Dorsolateral prefrontal cortex (tissue), 120 donors: ENCODE measurements at regions of chr11 and their contacts with region 1.

Region 1: GRCh38 chr11:68903288-68904247 is at the starts of genes IGHMBP2 and MRPL21:
- DNase-seq: peak; percentile 82 to 96 (median 88)
- H3K4me3 ChIP-seq: peak within 1 kb of the TSS; percentile 62 to 100 (median 94)
- H3K27ac ChIP-seq: peak within 1 kb of the TSS in 55 of 59 donors; percentile 23 to 92 (median 77)
- H3K27me3 ChIP-seq: no peaks in the 10 kb centered on the region
- CTCF ChIP-seq: peak in 25 of 56 donors; percentile 9 to 50 (median 30)
- total RNA-seq, gene IGHMBP2: 19.0 to 47.9 (median 30.3) TPM
- total RNA-seq, gene MRPL21: 23.7 to 72.9 (median 50.7) TPM

Region 2: GRCh38 chr11:68459886-68460740 is 443.5 kb before region 1 on chr11:
- intact Hi-C with region 1: loop called in 1 of 2 experiments (anchors 10 kb)
- DNase-seq: peak; percentile 91 to 99 (median 98)
- H3K4me3 ChIP-seq: peak overlapping the region; percentile 55 to 96 (median 86)
- H3K27ac ChIP-seq: peak overlapping the region; percentile 80 to 99 (median 95)
- H3K27me3 ChIP-seq: no peaks in the 10 kb centered on the region
- CTCF ChIP-seq: peak in 7 of 56 donors; percentile 1 to 43 (median 15)

Region 3: DNA sequence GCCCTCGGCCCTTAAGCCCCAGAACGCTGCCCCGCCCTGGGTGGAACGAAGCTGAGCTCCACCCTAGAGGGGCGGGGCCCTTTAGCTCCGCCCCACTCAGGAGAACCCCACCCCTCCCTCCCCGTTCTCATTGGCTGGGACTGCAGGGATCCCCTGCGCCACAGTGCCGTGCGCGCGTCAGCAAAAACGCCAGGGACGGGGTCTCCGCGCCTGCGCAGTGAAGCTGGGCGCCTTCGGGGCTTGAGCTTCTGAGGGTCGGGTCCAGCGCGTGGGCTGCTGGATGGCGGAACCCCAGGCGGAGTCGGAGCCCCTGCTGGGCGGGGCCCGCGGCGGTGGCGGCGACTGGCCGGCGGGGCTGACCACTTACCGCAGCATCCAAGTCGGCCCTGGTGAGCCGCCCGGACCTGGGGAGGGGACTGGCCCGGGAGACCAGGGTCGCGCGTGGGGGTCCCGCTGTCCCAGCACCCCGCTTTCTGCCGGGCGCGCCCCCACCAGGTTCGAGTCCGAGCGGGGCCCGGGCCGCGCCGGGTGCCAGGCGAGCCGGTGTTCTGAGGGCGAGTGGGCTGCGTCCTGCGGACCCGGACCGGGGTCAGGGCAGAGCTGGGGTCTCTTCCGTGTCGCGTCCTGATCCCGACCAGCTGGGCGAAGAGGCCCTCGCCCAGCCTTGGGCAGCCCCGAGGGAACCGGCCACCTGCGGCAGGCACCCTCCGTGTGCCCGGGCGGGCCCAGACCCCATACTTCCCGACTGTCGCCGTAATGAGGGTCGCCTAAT is 145.3 kb after region 1 on chr11 and contains the start of gene TPCN2:
- intact Hi-C with region 1: loop called (anchors 10 kb)
- DNase-seq: peak; percentile 86 to 94 (median 92)
- H3K4me3 ChIP-seq: peak within 1 kb of the TSS; percentile 66 to 100 (median 95)
- H3K27ac ChIP-seq: peak within 1 kb of the TSS in 57 of 59 donors; percentile 23 to 96 (median 83)
- H3K27me3 ChIP-seq: no peaks in the 10 kb centered on the region
- CTCF ChIP-seq: peak in 16 of 56 donors; percentile 6 to 44 (median 22)
- total RNA-seq, gene TPCN2: 15.3 to 43.5 (median 27.6) TPM

Region 4: GRCh38 chr11:69055598-69056516 is 152.3 kb after region 1 on chr11:
- intact Hi-C with region 1: loop called in 1 of 2 experiments (anchors 10 kb)
- DNase-seq: peak in 9 of 10 donors; percentile 43 to 76 (median 64)
- H3K4me3 ChIP-seq: peak overlapping the region in 1 of 59 donors; percentile 5
- H3K27ac ChIP-seq: peak overlapping the region in 17 of 59 donors; percentile 0 to 70 (median 32)
- H3K27me3 ChIP-seq: no peaks in the 10 kb centered on the region
- CTCF ChIP-seq: no peak

Region 5: GRCh38 chr11:69088676-69089146 is 185.1 kb after region 1 on chr11:
- intact Hi-C with region 1: loop called (anchors 5 to 10 kb)
- DNase-seq: peak in 9 of 10 donors; percentile 37 to 81 (median 73)
- H3K4me3 ChIP-seq: no peak overlapping the region
- H3K27ac ChIP-seq: no peak overlapping the region
- H3K27me3 ChIP-seq: no peaks in the 10 kb centered on the region
- CTCF ChIP-seq: peak; percentile 53 to 83 (median 75)

Region 6: DNA sequence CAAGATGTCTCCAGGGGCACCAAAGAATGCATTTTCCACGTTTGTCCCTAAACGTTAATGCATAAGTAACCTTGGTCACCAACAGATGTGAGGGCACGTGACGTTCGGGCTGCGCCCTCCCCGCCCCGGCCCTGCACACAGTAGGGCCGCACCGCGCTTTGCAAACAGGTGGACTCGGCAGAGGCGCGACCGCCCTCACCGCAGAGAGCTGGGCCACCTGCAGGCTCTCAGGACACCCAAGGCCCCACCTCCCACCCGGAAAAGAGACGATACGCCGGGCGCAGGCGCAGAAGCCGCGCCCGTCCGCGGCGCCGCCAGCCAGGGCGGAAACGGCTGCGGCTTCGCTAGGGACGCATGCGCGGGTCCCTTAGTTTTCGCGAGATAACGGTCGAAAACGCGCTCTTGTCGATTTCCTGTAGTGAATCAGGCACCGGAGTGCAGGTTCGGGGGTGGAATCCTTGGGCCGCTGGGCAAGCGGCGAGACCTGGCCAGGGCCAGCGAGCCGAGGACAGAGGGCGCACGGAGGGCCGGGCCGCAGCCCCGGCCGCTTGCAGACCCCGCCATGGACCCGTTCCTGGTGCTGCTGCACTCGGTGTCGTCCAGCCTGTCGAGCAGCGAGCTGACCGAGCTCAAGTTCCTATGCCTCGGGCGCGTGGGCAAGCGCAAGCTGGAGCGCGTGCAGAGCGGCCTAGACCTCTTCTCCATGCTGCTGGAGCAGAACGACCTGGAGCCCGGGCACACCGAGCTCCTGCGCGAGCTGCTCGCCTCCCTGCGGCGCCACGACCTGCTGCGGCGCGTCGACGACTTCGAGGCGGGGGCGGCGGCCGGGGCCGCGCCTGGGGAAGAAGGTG is 1299.6 kb after region 1 on chr11 and contains the start of gene FADD:
- intact Hi-C with region 1: loop called in 1 of 2 experiments (anchors 10 kb)
- DNase-seq: peak; percentile 71 to 92 (median 84)
- H3K4me3 ChIP-seq: peak within 1 kb of the TSS; percentile 67 to 100 (median 91)
- H3K27ac ChIP-seq: peak within 1 kb of the TSS; percentile 29 to 94 (median 85)
- H3K27me3 ChIP-seq: no peaks in the 10 kb centered on the region
- CTCF ChIP-seq: peak in 30 of 56 donors; percentile 5 to 66 (median 30)
- total RNA-seq, gene FADD: 8.6 to 18.8 (median 12.1) TPM